ENCODE measurements at regions of chr7 and their contacts with region 1.

Region 1: GRCh38 chr7:45157653-45158401 is at the start of gene RAMP3:
- DNase-seq: peak; percentile 30 to 63
- ATAC-seq: peak in 1 of 4 donors; percentile 33
- H3K4me3 ChIP-seq: peak within 1 kb of the TSS; percentile 60
- H3K27ac ChIP-seq: no peak within 1 kb of the TSS
- H3K4me1 ChIP-seq: no peaks in the 10 kb centered on the region
- H3K27me3 ChIP-seq: peaks cover 0 to 14% (median 4%) of the 10 kb centered on the region in 3 donors
- CTCF ChIP-seq: no peak
- total RNA-seq, gene RAMP3: 9.9 to 17.6 (median 14.5) TPM

Region 2: GRCh38 chr7:45146531-45147379 is 11.1 kb before region 1 on chr7:
- intact Hi-C with region 1: no loop called
- DNase-seq: peak in 1 of 2 donors; percentile 36
- ATAC-seq: no peak
- H3K4me3 ChIP-seq: no peak overlapping the region
- H3K27ac ChIP-seq: no peak overlapping the region
- H3K4me1 ChIP-seq: no peaks in the 10 kb centered on the region
- H3K27me3 ChIP-seq: peaks cover 0 to 8% (median 3%) of the 10 kb centered on the region in 3 donors
- CTCF ChIP-seq: no peak

Region 3: GRCh38 chr7:45259966-45260646 is 102.3 kb after region 1 on chr7:
- intact Hi-C with region 1: loop called (anchors 1 to 2 kb)
- DNase-seq: peak; percentile 55 to 75
- ATAC-seq: peak; percentile 57 to 80 (median 70)
- H3K4me3 ChIP-seq: no peak overlapping the region
- H3K27ac ChIP-seq: no peak overlapping the region
- H3K4me1 ChIP-seq: no peaks in the 10 kb centered on the region
- H3K27me3 ChIP-seq: peaks cover 0 to 4% (median 0%) of the 10 kb centered on the region in 3 donors
- CTCF ChIP-seq: peak; percentile 96

Region 4: DNA sequence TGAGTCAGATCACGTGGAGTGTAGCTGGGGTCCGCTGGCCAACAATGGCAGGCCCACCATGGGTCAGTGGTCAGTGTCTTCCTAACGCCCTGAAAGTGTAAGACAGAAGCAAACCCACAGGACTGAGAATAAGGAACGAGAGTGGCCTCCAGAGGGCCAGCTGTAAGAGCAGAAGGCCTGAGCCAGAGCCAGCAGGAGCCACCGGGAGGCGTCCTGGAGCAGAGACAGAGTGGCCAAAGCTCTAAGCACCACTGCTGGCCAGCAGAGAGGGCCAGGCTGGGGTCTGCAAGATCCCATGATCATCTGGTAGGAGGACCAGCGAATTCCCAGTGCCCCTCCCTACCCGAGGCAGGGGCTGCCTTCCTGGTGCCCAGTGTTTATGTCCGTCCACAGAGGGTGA is 705.9 kb after region 1 on chr7:
- intact Hi-C with region 1: loop called in 1 of 2 experiments (anchors 10 kb)
- DNase-seq: no peak
- ATAC-seq: no peak
- H3K4me3 ChIP-seq: no peak overlapping the region
- H3K27ac ChIP-seq: no peak overlapping the region
- H3K4me1 ChIP-seq: no peaks in the 10 kb centered on the region
- H3K27me3 ChIP-seq: peaks cover 0 to 11% (median 6%) of the 10 kb centered on the region in 3 donors
- CTCF ChIP-seq: no peak

Measured in psoas muscle (tissue), 8 donors.